ENCODE measurements at regions of chr4 and their contacts with region 1.

Region 1: GRCh38 chr4:169757575-169758184 is at the start of gene HPF1:
- DNase-seq: peak; percentile 92 to 95
- ATAC-seq: peak; percentile 90 to 99 (median 98)
- H3K4me3 ChIP-seq: peak within 1 kb of the TSS; percentile 87
- H3K27ac ChIP-seq: peak within 1 kb of the TSS; percentile 63
- H3K4me1 ChIP-seq: peaks cover 10% of the 10 kb centered on the region
- H3K27me3 ChIP-seq: no peaks in the 10 kb centered on the region
- CTCF ChIP-seq: no peak
- total RNA-seq, gene HPF1: 13.2 to 17.3 (median 15.3) TPM

Region 2: GRCh38 chr4:169707958-169708643 is 49.6 kb before region 1 on chr4:
- intact Hi-C with region 1: loop called in 1 of 2 experiments (anchors 5 kb)
- DNase-seq: no peak
- ATAC-seq: peak in 3 of 4 donors; percentile 21 to 61 (median 60)
- H3K4me3 ChIP-seq: no peak overlapping the region
- H3K27ac ChIP-seq: peak overlapping the region; percentile 17
- H3K4me1 ChIP-seq: peaks cover 11% of the 10 kb centered on the region
- H3K27me3 ChIP-seq: no peaks in the 10 kb centered on the region
- CTCF ChIP-seq: no peak

Region 3: GRCh38 chr4:169810325-169811323 is 52.9 kb after region 1 on chr4:
- intact Hi-C with region 1: no loop called
- DNase-seq: no peak
- ATAC-seq: peak in 3 of 4 donors; percentile 47 to 72 (median 49)
- H3K4me3 ChIP-seq: no peak overlapping the region
- H3K27ac ChIP-seq: no peak overlapping the region
- H3K4me1 ChIP-seq: no peaks in the 10 kb centered on the region
- H3K27me3 ChIP-seq: no peaks in the 10 kb centered on the region
- CTCF ChIP-seq: peak; percentile 88